ENCODE measurements at regions of chr11 and their contacts with region 1.

Region 1: GRCh38 chr11:64204464-64204989 is 2.0 kb upstream of the FERMT3 start:
- DNase-seq: peak; percentile 93
- H3K4me3 Mint-ChIP-seq: peak overlapping the region; percentile 13
- H3K27ac Mint-ChIP-seq: peak overlapping the region; percentile 89
- H3K4me1 Mint-ChIP-seq: peaks cover 49% of the 10 kb centered on the region
- H3K27me3 Mint-ChIP-seq: no peaks in the 10 kb centered on the region

Region 2: DNA sequence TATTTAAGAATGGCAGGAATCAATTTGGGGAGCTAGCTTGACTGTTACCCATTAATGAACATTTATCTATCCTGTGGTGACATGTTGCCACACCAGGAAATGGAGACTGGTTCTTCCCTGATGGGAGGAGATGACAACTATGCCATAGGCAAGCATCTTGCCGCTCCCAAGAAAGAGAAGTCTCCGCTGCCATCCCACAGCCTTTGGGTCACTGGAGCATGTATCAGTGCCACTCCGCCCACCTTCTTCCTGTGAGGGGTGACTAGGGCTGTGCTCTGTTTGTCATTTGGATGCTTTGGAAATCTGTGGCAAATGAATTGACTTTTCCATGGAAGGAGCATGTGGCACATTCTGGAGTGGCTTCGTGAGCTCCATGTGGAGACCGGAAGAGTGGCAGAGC is 12.1 kb before region 1 on chr11:
- CTCF ChIA-PET with region 1: interaction called, 25 read pairs
- intact Hi-C with region 1: no loop called
- DNase-seq: no peak
- H3K4me3 Mint-ChIP-seq: no peak overlapping the region
- H3K27ac Mint-ChIP-seq: no peak overlapping the region
- H3K4me1 Mint-ChIP-seq: peaks cover 39% of the 10 kb centered on the region
- H3K27me3 Mint-ChIP-seq: no peaks in the 10 kb centered on the region

Region 3: GRCh38 chr11:64225612-64226506 is 21.3 kb after region 1 on chr11 and contains the starts of genes NUDT22 and TRPT1:
- CTCF ChIA-PET with region 1: interaction called, 13 read pairs
- intact Hi-C with region 1: loop called (anchors 1 kb)
- DNase-seq: peak; percentile 94
- H3K4me3 Mint-ChIP-seq: peak within 1 kb of the TSS; percentile 87
- H3K27ac Mint-ChIP-seq: peak within 1 kb of the TSS; percentile 90
- H3K4me1 Mint-ChIP-seq: peaks cover 34% of the 10 kb centered on the region
- H3K27me3 Mint-ChIP-seq: no peaks in the 10 kb centered on the region
- total RNA-seq, gene NUDT22: 51.4 to 51.9 TPM
- total RNA-seq, gene TRPT1: 18.2 to 18.3 TPM

Region 4: DNA sequence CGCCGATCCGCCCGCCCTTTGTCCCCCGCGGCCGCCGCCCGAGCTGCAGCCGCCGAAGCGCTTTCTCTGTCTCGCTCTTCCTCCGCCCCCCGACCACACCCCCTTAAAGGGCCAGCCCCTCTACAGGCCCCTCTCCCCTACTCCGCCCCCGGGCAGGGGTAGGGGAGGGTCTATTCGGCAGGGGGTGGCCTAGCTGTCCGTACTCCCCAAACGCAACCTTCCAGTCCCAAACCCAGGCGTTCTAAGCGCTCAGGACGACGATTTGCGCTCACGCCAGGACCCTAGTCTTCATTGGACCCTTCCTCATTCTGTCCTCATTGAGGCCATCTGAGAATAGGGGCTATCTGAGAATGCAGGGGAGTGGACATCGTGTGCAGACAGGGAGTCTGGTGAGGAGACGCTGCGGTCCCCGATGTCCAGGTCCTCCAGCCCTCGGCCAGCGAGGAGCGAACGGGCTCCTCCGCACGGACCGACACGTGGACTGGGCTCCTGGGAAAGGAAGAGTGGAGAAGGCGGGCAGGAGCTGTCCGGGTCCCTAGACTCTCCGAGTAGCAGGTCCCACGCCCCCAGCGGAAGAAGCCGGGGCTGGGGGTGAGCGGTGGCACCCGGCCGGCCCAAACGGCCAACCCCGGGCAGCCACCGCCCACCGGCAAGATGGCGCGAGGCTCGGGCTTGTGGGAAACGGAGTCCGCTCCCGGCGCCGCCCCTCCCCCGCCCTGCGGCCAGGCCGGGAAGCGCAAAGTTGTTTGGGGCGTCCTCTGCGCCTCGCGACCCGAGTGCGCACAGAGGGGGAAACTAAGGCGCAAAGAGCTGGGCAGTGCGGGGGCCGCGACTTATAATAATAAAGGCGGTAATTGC is 42.6 kb after region 1 on chr11 and contains the start of gene PPP1R14B:
- CTCF ChIA-PET with region 1: interaction called, 10 read pairs
- intact Hi-C with region 1: loop called (anchors 1 kb)
- DNase-seq: peak; percentile 80
- H3K4me3 Mint-ChIP-seq: peak within 1 kb of the TSS; percentile 95
- H3K27ac Mint-ChIP-seq: peak within 1 kb of the TSS; percentile 91
- H3K4me1 Mint-ChIP-seq: peaks cover 29% of the 10 kb centered on the region
- H3K27me3 Mint-ChIP-seq: no peaks in the 10 kb centered on the region
- total RNA-seq, gene PPP1R14B: 216 to 227 TPM

Region 5: DNA sequence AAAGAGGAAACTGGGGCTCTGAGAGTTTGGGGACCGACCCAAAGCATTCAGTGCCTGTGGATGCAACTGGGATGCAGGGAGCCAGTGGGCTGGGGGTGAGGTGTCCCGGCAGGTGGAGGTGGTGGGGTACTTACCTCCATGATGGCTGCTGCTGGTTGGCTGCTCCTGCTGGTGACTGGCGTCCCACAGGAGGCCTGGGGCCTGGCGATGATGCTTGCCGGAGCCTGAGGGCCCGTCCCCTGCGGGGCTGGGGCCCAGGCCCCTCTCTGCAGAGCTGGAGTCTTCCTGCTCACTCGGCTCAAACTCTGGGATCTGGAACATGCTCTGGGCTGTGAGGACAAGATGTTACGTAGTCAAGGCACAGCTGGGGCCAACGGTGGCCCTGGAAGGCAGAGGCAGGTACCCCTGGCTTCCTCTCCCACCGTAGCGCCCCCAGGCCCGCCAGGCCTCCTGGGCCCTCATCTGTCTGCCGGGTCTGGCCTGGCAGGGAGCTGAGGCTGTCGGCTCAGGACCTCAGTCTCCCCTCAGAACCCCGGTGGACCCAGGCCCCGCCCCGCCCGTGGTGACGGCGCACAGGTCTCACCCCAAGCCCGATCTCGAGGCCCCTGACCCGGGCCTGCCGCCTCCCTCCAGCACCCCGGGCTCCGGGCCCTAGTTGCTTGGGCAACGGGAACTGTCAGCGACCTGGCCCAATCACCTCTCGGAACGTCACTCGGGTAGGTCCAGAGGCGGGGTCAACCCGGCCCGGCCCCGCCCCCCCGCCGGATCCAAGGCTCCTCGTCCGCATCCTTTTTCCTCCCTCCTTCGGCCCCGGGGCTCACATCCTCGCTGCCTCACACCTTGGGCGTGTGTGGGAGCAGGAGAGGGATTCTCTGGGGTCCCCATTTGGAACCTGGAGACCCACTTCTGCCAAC is 79.8 kb after region 1 on chr11 and contains the start of gene BAD:
- CTCF ChIA-PET with region 1: interaction called, 6 read pairs
- intact Hi-C with region 1: loop called (anchors 1 kb)
- DNase-seq: peak; percentile 95
- H3K4me3 Mint-ChIP-seq: peak within 1 kb of the TSS; percentile 82
- H3K27ac Mint-ChIP-seq: peak within 1 kb of the TSS; percentile 90
- H3K4me1 Mint-ChIP-seq: peaks cover 17% of the 10 kb centered on the region
- H3K27me3 Mint-ChIP-seq: no peaks in the 10 kb centered on the region
- total RNA-seq, gene BAD: 12.8 to 14.3 TPM